PC-9 (cell line): ENCODE measurements at regions of chr6 and their contacts with region 1.

Region 1: GRCh38 chr6:35507221-35507620 is 5.5 kb downstream of the TULP1 start:
- DNase-seq: no peak
- H3K4me3 ChIP-seq: no peak overlapping the region
- H3K27ac ChIP-seq: no peak overlapping the region
- H3K4me1 ChIP-seq: no peaks in the 10 kb centered on the region
- H3K27me3 ChIP-seq: no peaks in the 10 kb centered on the region
- CTCF ChIP-seq: no peak

Region 2: DNA sequence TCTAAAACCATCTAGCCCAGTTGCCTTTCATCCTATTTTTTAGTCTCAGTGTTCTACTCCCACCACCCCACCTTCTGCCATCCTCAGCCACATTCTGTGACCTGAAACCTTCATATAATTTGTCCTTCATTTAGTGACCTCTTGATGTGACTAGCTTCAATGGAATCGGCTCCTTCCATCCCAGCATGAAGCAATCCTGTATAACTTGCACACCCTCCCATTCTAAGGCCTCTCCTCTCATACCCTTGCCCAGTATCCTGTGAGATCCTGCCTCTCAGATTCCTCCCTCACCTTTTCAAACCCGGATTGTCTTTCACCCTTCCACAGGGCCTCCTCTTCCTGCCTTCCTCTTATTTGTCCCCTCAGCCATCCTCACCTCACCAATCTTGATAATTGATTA is 244.6 kb before region 1 on chr6:
- CTCF ChIA-PET with region 1: no interaction called
- POLR2A ChIA-PET with region 1: interaction called, 28 read pairs
- intact Hi-C with region 1: no loop called
- DNase-seq: no peak
- H3K4me3 ChIP-seq: no peak overlapping the region
- H3K27ac ChIP-seq: no peak overlapping the region
- H3K4me1 ChIP-seq: peaks cover 16% of the 10 kb centered on the region; the same call in 1 of the 2 replicates
- H3K27me3 ChIP-seq: no peaks in the 10 kb centered on the region
- CTCF ChIP-seq: no peak